Tibial artery (tissue), 4 donors: ENCODE measurements at regions of chr10 and their contacts with region 1.

Region 1: DNA sequence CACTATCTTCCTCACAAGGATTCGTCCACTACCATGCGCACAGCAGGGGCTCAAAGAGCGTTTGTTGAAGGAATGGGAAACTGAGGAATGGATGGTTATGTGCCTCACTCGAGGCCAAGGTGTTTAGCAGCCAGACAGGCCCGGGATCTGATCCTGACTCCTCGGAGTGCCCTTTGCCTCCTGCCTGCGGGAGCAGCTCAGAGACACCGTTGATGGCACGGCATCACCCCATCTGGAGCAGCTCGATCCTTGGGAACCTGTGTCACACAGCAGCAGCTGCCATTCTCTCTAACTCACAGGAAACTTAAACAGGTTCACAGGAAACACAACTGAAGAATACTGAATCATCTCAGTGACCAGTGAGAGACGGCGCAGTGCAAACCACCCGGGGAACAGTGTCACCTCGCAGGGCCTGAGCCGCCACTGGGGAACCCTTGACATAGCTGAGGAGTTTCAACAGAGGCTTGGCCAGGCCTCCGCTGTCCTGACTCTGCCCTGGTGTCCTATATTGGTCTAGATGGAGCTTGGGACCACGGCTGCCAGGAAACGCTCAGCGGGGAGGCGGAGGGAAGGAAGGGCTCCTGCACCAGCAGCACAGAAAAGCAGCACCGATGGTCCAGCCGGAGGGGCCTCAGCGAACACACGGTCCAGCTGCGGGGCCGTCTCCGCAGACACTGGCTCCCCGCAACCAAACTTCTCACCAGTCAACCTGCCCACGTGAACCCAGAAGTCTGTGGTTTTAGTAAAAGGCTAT is 169.4 kb downstream of the ADARB2 start:
- DNase-seq: peak in 1 of 2 donors; percentile 57
- H3K4me3 ChIP-seq: no peak overlapping the region
- H3K27ac ChIP-seq: no peak overlapping the region
- H3K4me1 ChIP-seq: no peaks in the 10 kb centered on the region
- H3K27me3 ChIP-seq: peaks cover 0 to 16% of the 10 kb centered on the region in 2 donors
- CTCF ChIP-seq: no peak

Region 2: GRCh38 chr10:1454428-1454827 is 113.5 kb before region 1 on chr10:
- intact Hi-C with region 1: no loop called
- DNase-seq: no peak
- H3K4me3 ChIP-seq: no peak overlapping the region
- H3K27ac ChIP-seq: no peak overlapping the region
- H3K4me1 ChIP-seq: no peaks in the 10 kb centered on the region
- H3K27me3 ChIP-seq: peaks cover 0 to 12% of the 10 kb centered on the region in 2 donors
- CTCF ChIP-seq: no peak

Region 3: GRCh38 chr10:2165771-2166460 is 598.0 kb after region 1 on chr10:
- intact Hi-C with region 1: loop called (anchors 5 kb)
- DNase-seq: no peak
- H3K4me3 ChIP-seq: no peak overlapping the region
- H3K27ac ChIP-seq: no peak overlapping the region
- H3K4me1 ChIP-seq: no peaks in the 10 kb centered on the region
- H3K27me3 ChIP-seq: no peaks in the 10 kb centered on the region
- CTCF ChIP-seq: no peak